ENCODE measurements at regions of chr16 and their contacts with region 1.

Region 1: GRCh38 chr16:50065624-50066481 is at the start of gene HEATR3:
- DNase-seq: peak; percentile 96
- H3K4me3 Mint-ChIP-seq: peak within 1 kb of the TSS; percentile 86
- H3K27ac Mint-ChIP-seq: peak within 1 kb of the TSS; percentile 81
- H3K4me1 Mint-ChIP-seq: peaks cover 27% of the 10 kb centered on the region
- H3K27me3 Mint-ChIP-seq: no peaks in the 10 kb centered on the region
- total RNA-seq, gene HEATR3: 16.3 to 17.5 TPM

Region 2: DNA sequence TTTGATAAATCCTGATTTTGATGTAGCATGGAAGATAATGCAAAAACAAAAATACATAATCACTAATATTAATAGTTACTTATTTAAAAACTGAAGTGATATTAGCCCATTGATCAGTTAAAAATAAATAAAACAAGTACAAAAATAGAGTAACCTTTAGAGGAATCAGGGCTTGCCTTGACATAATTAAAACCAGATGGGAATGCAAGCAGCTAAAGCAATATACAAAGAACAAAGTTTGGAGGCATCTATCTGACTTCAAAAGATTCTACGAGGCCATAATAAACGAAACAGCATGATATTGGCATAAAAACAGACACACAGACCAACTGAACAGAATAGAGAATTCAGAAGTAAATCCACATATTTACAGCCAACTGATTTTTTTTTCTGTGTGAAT is 15.1 kb before region 1 on chr16:
- CTCF ChIA-PET with region 1: no interaction called
- intact Hi-C with region 1: no loop called
- DNase-seq: no peak
- H3K4me3 Mint-ChIP-seq: no peak overlapping the region
- H3K27ac Mint-ChIP-seq: no peak overlapping the region
- H3K4me1 Mint-ChIP-seq: no peaks in the 10 kb centered on the region
- H3K27me3 Mint-ChIP-seq: no peaks in the 10 kb centered on the region

Region 3: DNA sequence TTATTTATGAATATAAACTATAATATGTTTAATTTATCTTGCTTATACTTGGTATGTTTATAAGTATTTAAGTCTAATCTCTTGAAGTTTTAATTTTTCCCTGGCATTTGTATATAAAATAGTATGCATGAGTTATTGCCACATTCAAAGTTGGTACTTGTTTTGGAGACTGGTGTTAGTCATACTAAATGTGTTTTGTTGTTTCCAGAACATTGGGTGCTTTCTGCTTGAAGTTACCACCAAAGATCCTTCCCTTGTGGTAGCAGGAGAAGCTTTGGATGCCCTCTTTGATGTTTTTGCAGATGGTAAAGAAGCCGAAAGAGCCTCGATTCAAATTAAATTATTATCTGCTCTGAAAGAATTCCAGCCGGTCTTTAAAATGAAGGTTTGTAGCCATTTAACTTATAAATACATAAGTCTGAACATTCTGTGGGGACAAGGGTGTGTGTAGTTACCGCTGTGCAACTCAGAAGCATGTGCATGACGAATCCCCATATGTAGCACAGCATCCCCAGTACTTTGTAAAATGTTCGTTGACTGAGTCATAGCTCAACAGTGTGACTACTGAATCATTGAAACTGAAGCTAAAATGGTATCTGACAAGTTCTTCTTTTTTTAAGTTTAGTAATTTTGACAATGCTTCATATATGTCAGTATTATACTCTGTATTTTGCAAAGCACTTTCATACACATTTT is 36.3 kb after region 1 on chr16:
- CTCF ChIA-PET with region 1: interaction called, 3 read pairs
- intact Hi-C with region 1: loop called (anchors 2 kb)
- DNase-seq: peak; percentile 36
- H3K4me3 Mint-ChIP-seq: no peak overlapping the region
- H3K27ac Mint-ChIP-seq: peak overlapping the region; percentile 35
- H3K4me1 Mint-ChIP-seq: peaks cover 8% of the 10 kb centered on the region
- H3K27me3 Mint-ChIP-seq: no peaks in the 10 kb centered on the region

Region 4: GRCh38 chr16:50121721-50122445 is 56.0 kb after region 1 on chr16:
- CTCF ChIA-PET with region 1: interaction called, 12 read pairs
- intact Hi-C with region 1: loop called (anchors 1 kb)
- DNase-seq: peak; percentile 93
- H3K4me3 Mint-ChIP-seq: peak overlapping the region; percentile 22
- H3K27ac Mint-ChIP-seq: peak overlapping the region; percentile 75
- H3K4me1 Mint-ChIP-seq: peaks cover 20% of the 10 kb centered on the region
- H3K27me3 Mint-ChIP-seq: no peaks in the 10 kb centered on the region

Region 5: GRCh38 chr16:50202926-50203624 is 137.2 kb after region 1 on chr16:
- CTCF ChIA-PET with region 1: interaction called, 12 read pairs
- intact Hi-C with region 1: no loop called
- DNase-seq: no peak
- H3K4me3 Mint-ChIP-seq: no peak overlapping the region
- H3K27ac Mint-ChIP-seq: no peak overlapping the region
- H3K4me1 Mint-ChIP-seq: peaks cover 56% of the 10 kb centered on the region
- H3K27me3 Mint-ChIP-seq: no peaks in the 10 kb centered on the region

Region 6: DNA sequence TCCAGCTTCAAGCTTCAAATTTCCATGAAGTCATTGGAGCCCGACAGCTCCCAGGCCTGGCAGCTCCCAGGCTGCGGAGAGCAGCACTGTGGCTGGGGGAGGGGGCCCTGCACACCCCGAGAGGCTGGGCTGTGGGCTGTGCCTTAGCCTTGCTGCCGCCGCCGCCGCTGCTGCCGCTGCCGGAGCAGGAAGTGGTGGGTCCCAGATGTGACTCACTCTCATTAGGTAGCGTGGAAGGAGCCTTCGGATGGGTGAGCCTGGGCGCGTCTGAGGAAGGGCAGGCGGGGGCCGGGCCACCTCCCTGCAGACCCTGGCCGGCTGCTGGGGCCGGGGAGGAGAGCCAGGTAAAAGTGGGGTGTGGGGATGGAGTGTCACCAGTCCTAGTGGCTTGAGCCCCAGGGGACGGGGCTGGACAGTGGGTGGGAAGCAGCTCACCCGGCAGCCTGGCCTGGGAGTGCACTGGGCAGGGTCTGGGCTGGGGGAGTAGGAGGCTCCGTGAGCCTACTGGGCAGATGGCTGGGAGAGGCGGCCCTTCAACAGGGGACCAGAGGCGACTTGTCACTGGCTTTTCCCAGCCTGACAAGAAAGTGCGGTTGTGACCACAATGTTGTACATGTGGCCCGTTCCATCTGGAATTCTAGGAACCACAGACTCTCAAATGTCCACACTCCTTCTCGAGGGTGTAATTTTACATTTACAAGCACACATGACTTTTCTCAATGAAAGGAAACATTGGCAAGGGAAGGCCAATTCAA is 200.7 kb after region 1 on chr16 and contains the start of gene ADCY7:
- CTCF ChIA-PET with region 1: no interaction called
- intact Hi-C with region 1: loop called (anchors 5 kb)
- DNase-seq: peak; percentile 91
- H3K4me3 Mint-ChIP-seq: peak within 1 kb of the TSS; percentile 86
- H3K27ac Mint-ChIP-seq: peak within 1 kb of the TSS; percentile 94
- H3K4me1 Mint-ChIP-seq: peaks cover 60% of the 10 kb centered on the region
- H3K27me3 Mint-ChIP-seq: peaks cover 3% of the 10 kb centered on the region
- total RNA-seq, gene ADCY7: 73.4 to 89.6 TPM

Region 7: GRCh38 chr16:50368410-50369132 is 302.7 kb after region 1 on chr16 and contains the start of gene BRD7:
- CTCF ChIA-PET with region 1: no interaction called
- intact Hi-C with region 1: loop called (anchors 2 kb)
- DNase-seq: peak; percentile 62
- H3K4me3 Mint-ChIP-seq: peak within 1 kb of the TSS; percentile 96
- H3K27ac Mint-ChIP-seq: peak within 1 kb of the TSS; percentile 86
- H3K4me1 Mint-ChIP-seq: peaks cover 46% of the 10 kb centered on the region
- H3K27me3 Mint-ChIP-seq: no peaks in the 10 kb centered on the region
- total RNA-seq, gene BRD7: 96.7 to 101 TPM

Region 8: DNA sequence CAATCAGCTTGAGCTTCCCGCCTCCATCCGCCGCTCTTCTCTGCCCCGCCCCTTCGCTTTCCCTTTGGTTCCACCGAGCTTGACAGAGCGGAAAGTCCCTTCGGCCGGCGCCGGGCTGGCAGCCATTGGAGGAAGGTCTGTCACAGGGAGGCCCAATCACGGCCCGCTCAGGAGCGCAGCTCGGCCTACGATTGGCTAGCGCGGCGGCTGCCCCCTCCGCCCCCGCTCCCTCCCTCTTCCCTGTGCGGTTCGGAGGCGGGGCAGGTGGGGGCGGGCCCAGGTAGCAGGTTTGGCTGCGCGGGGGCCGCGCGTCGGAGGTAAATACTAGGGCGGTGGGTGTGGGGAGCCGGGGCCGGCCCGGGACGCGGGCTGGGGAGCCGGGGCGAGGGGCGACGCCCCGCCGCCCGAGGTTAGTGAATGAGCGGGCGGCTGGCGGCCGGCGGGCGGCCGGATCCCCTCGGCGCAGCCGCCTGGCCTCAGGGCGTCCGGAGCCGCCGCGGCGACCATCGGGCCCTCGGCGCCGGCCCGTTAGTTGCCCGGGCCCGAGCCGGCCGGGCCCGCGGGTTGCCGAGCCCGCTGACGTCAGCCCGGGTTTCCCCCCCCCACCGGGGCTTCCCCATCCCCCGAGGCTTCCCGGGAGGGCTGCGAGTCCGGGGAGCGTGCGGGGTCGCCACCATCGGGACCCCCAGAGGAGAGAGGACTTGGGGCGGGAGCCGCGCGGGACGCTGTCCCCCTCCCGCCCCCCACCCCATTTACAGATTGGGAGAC is 676.1 kb after region 1 on chr16 and contains the start of gene CYLD:
- CTCF ChIA-PET with region 1: no interaction called
- intact Hi-C with region 1: loop called (anchors 1 kb)
- DNase-seq: peak; percentile 100
- H3K4me3 Mint-ChIP-seq: peak within 1 kb of the TSS; percentile 90
- H3K27ac Mint-ChIP-seq: peak within 1 kb of the TSS; percentile 96
- H3K4me1 Mint-ChIP-seq: peaks cover 42% of the 10 kb centered on the region
- H3K27me3 Mint-ChIP-seq: no peaks in the 10 kb centered on the region
- total RNA-seq, gene CYLD: 70.8 to 71.9 TPM

Measured in activated naive CD4-positive, alpha-beta T cell treated with anti-CD3 and anti-CD28 coated beads for 36 hours (primary cell).